ENCODE measurements at regions of chr10 and their contacts with region 1.

Region 1: DNA sequence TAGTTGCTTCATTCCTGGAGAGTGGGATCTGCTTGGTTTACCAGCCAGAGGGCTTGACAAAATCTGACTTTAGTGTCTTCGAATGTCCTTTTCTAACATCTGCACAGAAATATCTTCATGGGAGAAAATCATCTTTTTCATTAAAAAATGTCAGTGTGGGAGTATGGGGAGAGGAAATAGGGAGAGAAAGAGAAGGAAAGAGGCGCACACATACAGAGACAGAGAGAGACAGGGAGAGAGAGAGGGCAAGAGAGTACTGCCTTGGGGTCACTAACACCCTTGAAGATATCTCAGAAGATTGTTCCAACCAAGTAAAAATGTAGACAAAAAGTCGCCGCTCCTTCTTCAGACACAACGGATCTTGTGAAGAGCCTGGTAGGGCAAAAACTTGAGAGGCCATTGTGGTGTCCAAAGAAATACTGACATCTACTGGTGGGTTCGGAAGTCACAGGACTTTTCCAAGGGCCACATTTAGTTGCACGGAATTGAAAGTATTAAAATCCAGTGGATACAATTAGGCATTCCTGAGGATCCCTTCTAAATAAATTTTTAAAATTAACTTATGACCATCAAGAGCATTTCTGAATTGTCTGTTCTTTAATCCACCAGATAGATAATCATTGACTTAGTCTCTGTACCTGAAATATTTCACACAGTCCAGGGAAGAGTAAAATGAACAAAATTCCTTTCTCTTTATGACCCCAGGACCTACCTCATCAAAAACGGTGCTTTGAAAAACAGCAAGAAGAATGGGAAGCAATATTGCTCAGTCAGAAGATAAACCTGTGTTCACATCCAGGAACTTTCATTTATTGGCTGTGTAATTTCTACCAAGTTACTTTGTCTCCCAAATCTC is 29.7 kb downstream of the VIM start:
- DNase-seq: peak; percentile 30 to 84
- ATAC-seq: peak; percentile 82 to 92 (median 89)
- H3K4me3 ChIP-seq: no peak overlapping the region
- H3K4me3 Mint-ChIP-seq: no peak overlapping the region
- H3K27ac ChIP-seq: no peak overlapping the region
- H3K27ac Mint-ChIP-seq: no peak overlapping the region
- H3K4me1 ChIP-seq: no peaks in the 10 kb centered on the region
- H3K4me1 Mint-ChIP-seq: peaks cover 6% of the 10 kb centered on the region in 2 donors
- H3K27me3 ChIP-seq: no peaks in the 10 kb centered on the region
- H3K27me3 Mint-ChIP-seq: no peaks in the 10 kb centered on the region
- CTCF ChIP-seq: peak; percentile 88

Region 2: GRCh38 chr10:16626697-16627096 is 631.0 kb before region 1 on chr10:
- intact Hi-C with region 1: no loop called
- DNase-seq: no peak
- ATAC-seq: no peak
- H3K4me3 ChIP-seq: no peak overlapping the region
- H3K4me3 Mint-ChIP-seq: no peak overlapping the region
- H3K27ac ChIP-seq: no peak overlapping the region
- H3K27ac Mint-ChIP-seq: no peak overlapping the region
- H3K4me1 ChIP-seq: no peaks in the 10 kb centered on the region
- H3K4me1 Mint-ChIP-seq: peaks cover 4 to 14% of the 10 kb centered on the region in 2 donors
- H3K27me3 ChIP-seq: no peaks in the 10 kb centered on the region
- H3K27me3 Mint-ChIP-seq: no peaks in the 10 kb centered on the region
- CTCF ChIP-seq: no peak

Region 3: GRCh38 chr10:16828114-16828568 is 429.6 kb before region 1 on chr10:
- intact Hi-C with region 1: loop called (anchors 1 kb)
- DNase-seq: peak; percentile 33 to 90
- ATAC-seq: peak; percentile 84 to 90 (median 85)
- H3K4me3 ChIP-seq: no peak overlapping the region
- H3K4me3 Mint-ChIP-seq: no peak overlapping the region
- H3K27ac ChIP-seq: no peak overlapping the region
- H3K27ac Mint-ChIP-seq: no peak overlapping the region
- H3K4me1 ChIP-seq: peaks cover 7% of the 10 kb centered on the region
- H3K4me1 Mint-ChIP-seq: peaks cover 10 to 11% of the 10 kb centered on the region in 2 donors
- H3K27me3 ChIP-seq: no peaks in the 10 kb centered on the region
- H3K27me3 Mint-ChIP-seq: peaks cover 3 to 18% of the 10 kb centered on the region in 2 donors
- CTCF ChIP-seq: peak; percentile 69

Region 4: GRCh38 chr10:16843252-16843870 is 414.3 kb before region 1 on chr10:
- intact Hi-C with region 1: loop called (anchors 1 kb)
- DNase-seq: peak in 1 of 2 donors; percentile 79
- ATAC-seq: peak; percentile 65 to 69 (median 67)
- H3K4me3 ChIP-seq: no peak overlapping the region
- H3K4me3 Mint-ChIP-seq: no peak overlapping the region
- H3K27ac ChIP-seq: no peak overlapping the region
- H3K27ac Mint-ChIP-seq: no peak overlapping the region
- H3K4me1 ChIP-seq: no peaks in the 10 kb centered on the region
- H3K4me1 Mint-ChIP-seq: peaks cover 0 to 6% of the 10 kb centered on the region in 2 donors
- H3K27me3 ChIP-seq: no peaks in the 10 kb centered on the region
- H3K27me3 Mint-ChIP-seq: peaks cover 2 to 8% of the 10 kb centered on the region in 2 donors
- CTCF ChIP-seq: peak; percentile 75

Region 5: GRCh38 chr10:17375936-17376584 is 118.4 kb after region 1 on chr10:
- intact Hi-C with region 1: no loop called
- DNase-seq: peak in 1 of 2 donors; percentile 39
- ATAC-seq: no peak
- H3K4me3 ChIP-seq: no peak overlapping the region
- H3K4me3 Mint-ChIP-seq: no peak overlapping the region
- H3K27ac ChIP-seq: no peak overlapping the region
- H3K27ac Mint-ChIP-seq: no peak overlapping the region
- H3K4me1 ChIP-seq: no peaks in the 10 kb centered on the region
- H3K4me1 Mint-ChIP-seq: no peaks in the 10 kb centered on the region
- H3K27me3 ChIP-seq: no peaks in the 10 kb centered on the region
- H3K27me3 Mint-ChIP-seq: no peaks in the 10 kb centered on the region
- CTCF ChIP-seq: peak; percentile 41